ENCODE measurements at regions of chr3 and their contacts with region 1.

Region 1: DNA sequence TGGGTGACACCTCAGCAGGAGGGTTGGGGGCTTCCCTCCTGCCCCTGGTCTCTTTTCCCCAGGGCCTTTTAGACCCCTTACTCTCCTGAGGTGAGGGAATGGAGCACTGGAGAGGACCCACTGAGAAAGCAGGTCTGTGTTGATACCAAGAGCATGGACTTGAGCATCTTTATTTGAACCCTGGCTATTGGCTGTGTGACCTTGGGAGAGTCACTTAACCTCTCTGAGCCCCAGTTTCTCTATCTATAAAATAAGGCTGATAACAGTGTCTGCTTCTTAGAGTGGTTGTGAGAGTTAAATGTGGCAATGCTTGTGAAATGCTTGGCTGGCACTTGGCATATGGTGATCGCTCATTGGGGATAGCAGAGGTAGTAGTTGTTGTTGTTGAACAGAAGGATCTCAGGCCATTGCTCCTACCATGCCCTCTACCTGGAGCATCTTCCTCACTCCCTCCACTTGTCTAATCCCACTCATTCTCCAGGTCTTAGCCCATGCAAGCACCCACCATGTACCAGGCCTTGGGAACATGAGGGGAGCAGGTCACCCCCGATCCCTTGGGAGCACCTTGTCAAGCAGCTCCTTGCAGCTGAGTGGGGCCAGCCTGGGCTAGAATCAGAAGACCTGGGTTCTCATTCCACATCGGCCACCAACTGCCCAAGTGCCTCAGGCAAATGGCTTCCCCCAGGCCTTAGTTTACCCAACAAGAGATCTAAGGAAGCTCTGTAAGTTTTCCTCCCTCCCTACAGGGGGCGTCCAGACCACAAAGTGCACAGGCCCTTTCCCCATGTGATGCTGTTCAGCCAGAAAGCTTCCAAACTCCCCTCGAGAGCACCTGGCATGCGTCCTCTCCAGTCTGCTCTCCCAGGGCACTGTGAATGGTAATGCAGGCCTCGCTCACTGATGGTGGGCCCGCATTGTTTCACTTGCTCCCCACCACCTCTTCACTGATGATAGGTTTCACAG is 96.7 kb downstream of the LSM3 start:
- DNase-seq: peak; percentile 69
- H3K4me3 ChIP-seq: no peak overlapping the region
- H3K27ac ChIP-seq: no peak overlapping the region
- H3K4me1 ChIP-seq: peaks cover 16% of the 10 kb centered on the region
- CTCF ChIP-seq: peak; percentile 80

Region 2: DNA sequence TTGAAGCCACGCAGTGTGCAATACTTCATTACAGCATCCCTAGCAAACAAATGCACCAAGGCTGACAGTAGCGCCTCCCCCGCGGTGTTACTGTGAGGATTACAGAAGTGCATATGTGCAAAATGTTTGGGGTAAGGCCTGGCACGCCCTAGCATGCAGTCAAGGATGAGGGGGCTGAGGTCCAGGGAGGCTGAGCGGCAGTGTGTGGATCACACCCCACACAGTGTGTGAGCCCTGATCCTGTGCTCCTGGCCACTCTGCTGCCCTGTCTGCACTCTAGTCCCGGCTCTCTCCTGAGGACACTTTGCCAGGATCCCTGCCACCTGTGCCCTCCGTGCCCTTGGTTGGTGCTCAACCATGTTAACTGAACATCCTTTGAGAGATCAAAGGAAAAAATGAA is 466.7 kb before region 1 on chr3:
- CTCF ChIA-PET with region 1: no interaction called
- POLR2A ChIA-PET with region 1: no interaction called
- intact Hi-C with region 1: no loop called
- DNase-seq: no peak
- H3K4me3 ChIP-seq: no peak overlapping the region
- H3K27ac ChIP-seq: no peak overlapping the region
- H3K4me1 ChIP-seq: no peaks in the 10 kb centered on the region
- CTCF ChIP-seq: no peak

Region 3: GRCh38 chr3:14345308-14346150 is 70.2 kb after region 1 on chr3:
- CTCF ChIA-PET with region 1: no interaction called
- POLR2A ChIA-PET with region 1: no interaction called
- intact Hi-C with region 1: no loop called
- DNase-seq: no peak
- H3K4me3 ChIP-seq: no peak overlapping the region
- H3K27ac ChIP-seq: no peak overlapping the region
- H3K4me1 ChIP-seq: peaks cover 7% of the 10 kb centered on the region
- CTCF ChIP-seq: no peak

Region 4: DNA sequence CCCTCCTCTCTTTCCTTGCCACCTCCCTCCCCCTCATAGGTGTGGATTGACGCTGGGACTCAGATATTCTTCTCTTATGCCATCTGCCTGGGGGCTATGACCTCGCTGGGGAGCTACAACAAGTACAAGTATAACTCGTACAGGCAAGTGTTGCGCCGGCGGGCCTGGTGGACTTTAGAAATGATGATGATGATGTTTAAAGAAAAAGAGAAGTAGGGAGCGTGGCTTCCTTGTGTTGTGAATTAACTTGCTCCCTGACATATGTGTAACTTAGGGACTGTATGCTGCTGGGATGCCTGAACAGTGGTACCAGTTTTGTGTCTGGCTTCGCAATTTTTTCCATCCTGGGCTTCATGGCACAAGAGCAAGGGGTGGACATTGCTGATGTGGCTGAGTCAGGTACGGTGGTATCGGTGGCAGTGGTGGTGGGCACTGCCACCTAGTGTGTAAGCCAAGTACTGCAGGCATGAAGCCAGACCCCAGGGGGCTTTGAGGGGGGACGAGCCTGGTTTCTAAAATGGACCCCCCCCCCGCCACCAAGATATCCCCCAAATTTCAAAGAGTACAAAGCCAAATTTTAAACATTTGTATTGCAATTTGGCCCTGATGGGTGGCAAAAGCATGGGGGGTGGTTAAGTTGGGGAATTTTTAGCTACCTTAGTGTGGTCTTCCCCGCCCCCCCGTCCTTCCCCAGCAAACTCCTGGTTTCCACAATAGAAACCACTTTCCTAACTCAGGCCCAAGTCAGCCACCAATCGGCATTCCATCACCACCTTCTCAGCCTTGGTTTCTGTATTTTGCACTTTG is 192.7 kb after region 1 on chr3:
- CTCF ChIA-PET with region 1: no interaction called
- POLR2A ChIA-PET with region 1: no interaction called
- intact Hi-C with region 1: loop called (anchors 1 kb)
- DNase-seq: peak; percentile 53
- H3K4me3 ChIP-seq: no peak overlapping the region
- H3K27ac ChIP-seq: no peak overlapping the region
- H3K4me1 ChIP-seq: no peaks in the 10 kb centered on the region
- CTCF ChIP-seq: peak; percentile 92